ENCODE measurements at regions of chr5 and their contacts with region 1.

Region 1: GRCh38 chr5:127572930-127573329 is 55.5 kb downstream of the PRRC1 start:
- DNase-seq: no peak
- H3K4me3 ChIP-seq: no peak overlapping the region
- H3K27ac ChIP-seq: no peak overlapping the region
- H3K4me1 ChIP-seq: peaks cover 11% of the 10 kb centered on the region
- H3K27me3 ChIP-seq: peaks cover 16 to 20% of the 10 kb centered on the region in 2 experiments
- CTCF ChIP-seq: peak in 1 of 2 donors; percentile 7
- POLR2A ChIP-seq: no peak

Region 2: GRCh38 chr5:127723572-127723971 is 150.6 kb after region 1 on chr5:
- CTCF ChIA-PET with region 1: no interaction called
- POLR2A ChIA-PET with region 1: no interaction called
- dilution Hi-C with region 1: no loop called
- intact Hi-C with region 1: loop called (anchors 10 kb)
- DNase-seq: peak; percentile 81
- H3K4me3 ChIP-seq: no peak overlapping the region
- H3K27ac ChIP-seq: no peak overlapping the region
- H3K4me1 ChIP-seq: peaks cover 10% of the 10 kb centered on the region
- H3K27me3 ChIP-seq: no peaks in the 10 kb centered on the region
- CTCF ChIP-seq: no peak
- POLR2A ChIP-seq: no peak

Measured in endothelial cell of umbilical vein (primary cell).